T-cell (primary cell): ENCODE measurements at regions of chr12 and their contacts with region 1.

Region 1: GRCh38 chr12:101607902-101608742 is 13.4 kb downstream of the MYBPC1 start:
- DNase-seq: no peak
- ATAC-seq: no peak
- H3K4me3 ChIP-seq: no peak overlapping the region
- H3K4me3 Mint-ChIP-seq: no peak overlapping the region
- H3K27ac ChIP-seq: no peak overlapping the region
- H3K27ac Mint-ChIP-seq: no peak overlapping the region
- H3K4me1 ChIP-seq: no peaks in the 10 kb centered on the region
- H3K4me1 Mint-ChIP-seq: no peaks in the 10 kb centered on the region
- H3K27me3 ChIP-seq: peaks cover 0 to 3% of the 10 kb centered on the region in 2 experiments
- H3K27me3 Mint-ChIP-seq: no peaks in the 10 kb centered on the region

Region 2: GRCh38 chr12:101773650-101774162 is 165.6 kb after region 1 on chr12:
- CTCF ChIA-PET with region 1: interaction called in 1 of 2 experiments, 10 read pairs
- POLR2A ChIA-PET with region 1: no interaction called
- DNase-seq: peak; percentile 32 to 85 (median 60)
- ATAC-seq: peak; percentile 84 to 94 (median 90)
- H3K4me3 ChIP-seq: no peak overlapping the region
- H3K4me3 Mint-ChIP-seq: no peak overlapping the region
- H3K27ac ChIP-seq: no peak overlapping the region
- H3K27ac Mint-ChIP-seq: no peak overlapping the region
- H3K4me1 ChIP-seq: no peaks in the 10 kb centered on the region
- H3K4me1 Mint-ChIP-seq: peaks cover 0 to 7% (median 5%) of the 10 kb centered on the region in 3 donors
- H3K27me3 ChIP-seq: no peaks in the 10 kb centered on the region
- H3K27me3 Mint-ChIP-seq: no peaks in the 10 kb centered on the region